ENCODE measurements at regions of chr7 and their contacts with region 1.

Region 1: GRCh38 chr7:36135700-36136099 is 17.4 kb upstream of the EEPD1 start:
- DNase-seq: no peak
- ATAC-seq: no peak
- H3K4me3 ChIP-seq: no peak overlapping the region
- H3K4me3 Mint-ChIP-seq: no peak overlapping the region
- H3K27ac ChIP-seq: no peak overlapping the region
- H3K27ac Mint-ChIP-seq: no peak overlapping the region
- H3K4me1 ChIP-seq: no peaks in the 10 kb centered on the region
- H3K4me1 Mint-ChIP-seq: no peaks in the 10 kb centered on the region
- H3K27me3 ChIP-seq: no peaks in the 10 kb centered on the region
- H3K27me3 Mint-ChIP-seq: no peaks in the 10 kb centered on the region
- CTCF ChIP-seq: no peak

Region 2: GRCh38 chr7:36084475-36085097 is 51.1 kb before region 1 on chr7:
- CTCF ChIA-PET with region 1: no interaction called
- POLR2A ChIA-PET with region 1: no interaction called
- intact Hi-C with region 1: loop called in 1 of 2 experiments (anchors 2 kb)
- DNase-seq: no peak
- ATAC-seq: no peak
- H3K4me3 ChIP-seq: no peak overlapping the region
- H3K4me3 Mint-ChIP-seq: no peak overlapping the region
- H3K27ac ChIP-seq: no peak overlapping the region
- H3K27ac Mint-ChIP-seq: no peak overlapping the region
- H3K4me1 ChIP-seq: no peaks in the 10 kb centered on the region
- H3K4me1 Mint-ChIP-seq: no peaks in the 10 kb centered on the region
- H3K27me3 ChIP-seq: no peaks in the 10 kb centered on the region
- H3K27me3 Mint-ChIP-seq: peaks cover 2% of the 10 kb centered on the region
- CTCF ChIP-seq: no peak